ENCODE measurements at regions of chr2 and their contacts with region 1.

Region 1: DNA sequence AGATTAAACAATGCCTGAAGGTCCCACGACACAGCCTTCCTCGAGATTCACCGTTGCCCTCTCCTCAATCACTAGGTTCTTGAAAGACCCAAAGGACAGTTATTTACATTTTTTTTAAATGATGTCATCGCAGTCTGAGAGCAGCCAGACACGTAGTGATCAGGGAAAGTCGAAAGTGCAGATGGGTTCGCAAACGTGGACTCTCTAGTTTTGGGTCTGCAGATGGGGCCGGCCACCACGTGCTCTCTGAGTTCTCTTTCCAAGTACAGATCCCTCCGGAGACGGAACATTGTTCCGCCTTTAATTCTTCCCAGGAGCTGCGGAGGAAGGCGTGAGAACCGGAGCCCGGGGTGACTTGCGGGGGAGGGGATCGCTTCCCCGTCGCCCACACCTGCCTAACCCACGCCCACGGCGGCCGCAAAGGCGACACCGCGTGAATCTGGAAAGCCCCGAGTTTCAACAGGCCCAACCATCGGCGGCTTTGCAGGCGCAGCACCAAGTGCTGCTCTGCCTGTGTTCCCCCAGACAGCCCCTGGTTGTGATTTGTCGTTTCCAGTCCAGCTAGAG is 54.3 kb downstream of the PKDCC start:
- DNase-seq: peak; percentile 94 to 98
- ATAC-seq: peak; percentile 80 to 92 (median 86)
- H3K4me3 ChIP-seq: peak overlapping the region; percentile 41
- H3K4me3 Mint-ChIP-seq: peak overlapping the region; percentile 87
- H3K27ac ChIP-seq: peak overlapping the region; percentile 99
- H3K27ac Mint-ChIP-seq: peak overlapping the region in 1 of 2 donors; percentile 99
- H3K4me1 ChIP-seq: peaks cover 93% of the 10 kb centered on the region
- H3K4me1 Mint-ChIP-seq: peaks cover 28 to 49% of the 10 kb centered on the region in 2 donors
- H3K27me3 ChIP-seq: no peaks in the 10 kb centered on the region
- H3K27me3 Mint-ChIP-seq: no peaks in the 10 kb centered on the region
- CTCF ChIP-seq: no peak

Region 2: DNA sequence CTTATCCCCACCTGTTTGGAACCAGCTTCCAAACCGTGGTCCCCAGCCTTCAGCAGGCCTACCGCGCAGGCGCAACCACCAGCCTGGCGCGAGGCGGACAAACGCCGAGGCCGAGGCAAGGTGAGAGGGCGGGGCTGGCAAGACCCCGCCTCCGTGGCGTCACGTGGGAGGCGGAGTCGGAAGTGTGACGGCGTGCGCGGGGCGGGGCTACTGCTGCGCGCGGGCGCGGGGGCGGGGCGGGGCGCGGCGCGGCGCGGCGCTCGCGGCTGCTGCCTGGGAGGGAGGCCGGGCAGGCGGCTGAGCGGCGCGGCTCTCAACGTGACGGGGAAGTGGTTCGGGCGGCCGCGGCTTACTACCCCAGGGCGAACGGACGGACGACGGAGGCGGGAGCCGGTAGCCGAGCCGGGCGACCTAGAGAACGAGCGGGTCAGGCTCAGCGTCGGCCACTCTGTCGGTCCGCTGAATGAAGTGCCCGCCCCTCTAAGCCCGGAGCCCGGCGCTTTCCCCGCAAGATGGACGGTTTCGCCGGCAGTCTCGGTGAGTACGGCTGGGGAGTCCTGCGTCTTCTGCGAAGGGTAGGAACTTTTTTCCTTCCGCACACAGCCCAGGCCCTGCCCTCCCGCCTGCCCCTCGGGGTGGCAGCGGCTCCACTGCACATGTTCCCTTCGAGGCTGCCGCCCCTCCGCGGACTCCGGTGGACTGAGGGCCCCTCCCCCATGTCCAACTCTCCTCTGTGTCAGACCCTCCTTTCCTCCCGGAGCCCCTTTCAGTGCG is 67.2 kb after region 1 on chr2 and contains the start of gene EML4:
- intact Hi-C with region 1: loop called (anchors 1 kb)
- DNase-seq: peak; percentile 94 to 96
- ATAC-seq: peak; percentile 92 to 98 (median 94)
- H3K4me3 ChIP-seq: peak within 1 kb of the TSS; percentile 96
- H3K4me3 Mint-ChIP-seq: peak within 1 kb of the TSS; percentile 45
- H3K27ac ChIP-seq: peak within 1 kb of the TSS; percentile 94
- H3K27ac Mint-ChIP-seq: no peak within 1 kb of the TSS
- H3K4me1 ChIP-seq: peaks cover 19% of the 10 kb centered on the region
- H3K4me1 Mint-ChIP-seq: peaks cover 0 to 7% of the 10 kb centered on the region in 2 donors
- H3K27me3 ChIP-seq: no peaks in the 10 kb centered on the region
- H3K27me3 Mint-ChIP-seq: peaks cover 3 to 4% of the 10 kb centered on the region in 2 donors
- CTCF ChIP-seq: no peak
- total RNA-seq, gene EML4: 88.4 to 136 (median 91.5) TPM

Region 3: DNA sequence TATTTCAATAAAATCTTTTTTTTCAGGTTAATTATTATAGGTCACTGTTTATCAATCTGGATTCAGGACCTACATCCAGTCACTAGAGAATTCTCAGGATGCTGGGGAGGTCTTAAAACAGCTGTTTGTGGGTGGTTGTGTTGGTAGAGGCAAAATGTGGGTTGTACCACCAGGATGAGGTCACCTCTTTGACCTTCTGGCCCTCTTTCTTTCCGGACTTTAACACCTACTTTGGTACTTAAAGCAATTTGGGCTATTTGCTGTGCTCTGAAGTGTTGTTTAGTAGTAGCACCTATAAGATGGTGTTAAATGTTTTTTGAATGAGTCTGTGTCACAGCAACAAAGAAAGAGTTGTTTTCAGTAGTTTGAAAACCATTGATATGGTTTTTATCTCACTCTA is 81.7 kb after region 1 on chr2:
- intact Hi-C with region 1: loop called (anchors 2 kb)
- DNase-seq: peak in 1 of 2 donors; percentile 44
- ATAC-seq: peak; percentile 88 to 92 (median 89)
- H3K4me3 ChIP-seq: no peak overlapping the region
- H3K4me3 Mint-ChIP-seq: no peak overlapping the region
- H3K27ac ChIP-seq: no peak overlapping the region
- H3K27ac Mint-ChIP-seq: peak overlapping the region; percentile 77 to 80
- H3K4me1 ChIP-seq: peaks cover 16% of the 10 kb centered on the region
- H3K4me1 Mint-ChIP-seq: peaks cover 35 to 43% of the 10 kb centered on the region in 2 donors
- H3K27me3 ChIP-seq: no peaks in the 10 kb centered on the region
- H3K27me3 Mint-ChIP-seq: no peaks in the 10 kb centered on the region
- CTCF ChIP-seq: no peak

Measured in natural killer cell (primary cell).